Body of pancreas (tissue), 4 donors: ENCODE measurements at regions of chr16 and their contacts with region 1.

Region 1: DNA sequence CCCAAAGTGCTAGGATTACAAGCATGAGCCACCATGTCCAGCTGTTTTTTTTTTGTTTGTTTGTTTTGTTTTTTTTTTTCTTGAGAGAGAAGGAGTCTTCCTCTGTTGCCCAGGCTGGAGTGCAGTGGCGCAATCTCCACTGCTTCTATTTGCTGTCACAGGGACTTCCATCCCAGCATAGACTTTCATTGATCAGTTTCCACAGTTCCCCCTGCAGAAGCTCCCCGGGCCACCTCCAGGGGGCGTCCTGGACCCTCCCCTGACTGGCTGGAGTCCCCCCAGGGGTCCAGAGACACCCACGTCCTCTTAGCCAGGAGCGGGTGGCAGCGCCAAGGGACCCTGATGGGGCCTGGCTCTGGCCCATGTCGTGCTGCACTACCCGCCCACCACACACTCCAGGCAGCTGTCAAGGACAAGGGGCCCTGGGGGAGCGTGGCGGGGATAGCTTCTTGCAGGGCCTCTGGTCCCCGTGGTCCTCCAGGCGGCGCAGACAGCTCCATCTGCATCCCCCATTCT is 3.1 kb upstream of the NPW start:
- DNase-seq: no peak
- ATAC-seq: no peak
- H3K4me3 ChIP-seq: no peak overlapping the region
- H3K27ac ChIP-seq: no peak overlapping the region
- H3K4me1 ChIP-seq: peaks cover 15% of the 10 kb centered on the region
- H3K27me3 ChIP-seq: peaks cover 0 to 10% of the 10 kb centered on the region in 2 donors
- CTCF ChIP-seq: no peak
- POLR2A ChIP-seq: no peak

Region 2: GRCh38 chr16:2142942-2143877 is 126.7 kb after region 1 on chr16:
- intact Hi-C with region 1: loop called (anchors 5 kb)
- DNase-seq: peak in 2 of 4 donors; percentile 43 to 53
- ATAC-seq: no peak
- H3K4me3 ChIP-seq: no peak overlapping the region
- H3K27ac ChIP-seq: no peak overlapping the region
- H3K4me1 ChIP-seq: peaks cover 24% of the 10 kb centered on the region
- H3K27me3 ChIP-seq: no peaks in the 10 kb centered on the region
- CTCF ChIP-seq: no peak
- POLR2A ChIP-seq: no peak